Right ventricle myocardium superior (tissue), 1 donor: ENCODE measurements at regions of chr6 and their contacts with region 1.

Region 1: GRCh38 chr6:81241126-81242041 is 511.1 kb downstream of the TENT5A start:
- DNase-seq: no peak
- ATAC-seq: peak; percentile 71

Region 2: GRCh38 chr6:81465859-81466258 is 224.5 kb after region 1 on chr6:
- intact Hi-C with region 1: loop called (anchors 10 kb)
- DNase-seq: no peak
- ATAC-seq: no peak